GM10248 (cell line): ENCODE measurements at regions of chr10 and their contacts with region 1.

Region 1: GRCh38 chr10:75235375-75236177 is at the start of gene COMTD1:
- DNase-seq: peak; percentile 95
- CTCF ChIP-seq: peak; percentile 100

Region 2: GRCh38 chr10:74244097-74244685 is 991.4 kb before region 1 on chr10:
- CTCF ChIA-PET with region 1: interaction called, 10 read pairs
- POLR2A ChIA-PET with region 1: no interaction called
- DNase-seq: no peak
- CTCF ChIP-seq: peak; percentile 30

Region 3: DNA sequence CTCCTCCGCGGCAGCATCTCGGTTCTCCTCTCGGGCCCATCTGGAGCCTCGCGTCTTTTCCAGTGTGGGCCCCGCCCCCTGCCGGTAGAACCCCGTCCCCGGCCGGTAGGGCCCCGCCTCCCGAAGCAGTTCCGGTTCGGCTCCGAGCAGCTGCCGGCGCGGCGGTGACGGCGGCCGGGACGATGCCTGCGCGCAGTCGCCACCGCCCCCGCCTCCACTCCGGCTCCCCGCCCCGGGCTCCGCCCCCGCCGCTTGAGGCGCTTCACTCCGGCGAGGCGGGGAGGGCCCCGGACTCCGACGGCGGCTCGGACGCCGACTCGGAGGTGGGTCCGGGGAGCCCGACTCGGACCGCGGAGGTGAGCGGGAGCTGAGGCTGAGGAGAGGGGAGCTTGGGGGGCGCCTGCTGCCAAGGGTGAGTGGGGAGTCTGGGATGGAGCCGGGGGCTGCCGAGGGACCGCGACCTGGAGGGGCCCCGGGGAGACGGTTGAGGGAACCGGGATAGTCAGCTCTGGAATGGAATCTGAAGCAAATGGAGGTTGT is 124.1 kb before region 1 on chr10 and contains the start of gene SAMD8:
- CTCF ChIA-PET with region 1: interaction called, 12 read pairs
- POLR2A ChIA-PET with region 1: no interaction called
- DNase-seq: peak; percentile 100
- CTCF ChIP-seq: peak; percentile 0

Region 4: GRCh38 chr10:75187961-75188426 is 47.6 kb before region 1 on chr10:
- CTCF ChIA-PET with region 1: interaction called, 148 read pairs
- POLR2A ChIA-PET with region 1: interaction called, 4 read pairs
- DNase-seq: peak; percentile 72
- CTCF ChIP-seq: peak; percentile 76

Region 5: DNA sequence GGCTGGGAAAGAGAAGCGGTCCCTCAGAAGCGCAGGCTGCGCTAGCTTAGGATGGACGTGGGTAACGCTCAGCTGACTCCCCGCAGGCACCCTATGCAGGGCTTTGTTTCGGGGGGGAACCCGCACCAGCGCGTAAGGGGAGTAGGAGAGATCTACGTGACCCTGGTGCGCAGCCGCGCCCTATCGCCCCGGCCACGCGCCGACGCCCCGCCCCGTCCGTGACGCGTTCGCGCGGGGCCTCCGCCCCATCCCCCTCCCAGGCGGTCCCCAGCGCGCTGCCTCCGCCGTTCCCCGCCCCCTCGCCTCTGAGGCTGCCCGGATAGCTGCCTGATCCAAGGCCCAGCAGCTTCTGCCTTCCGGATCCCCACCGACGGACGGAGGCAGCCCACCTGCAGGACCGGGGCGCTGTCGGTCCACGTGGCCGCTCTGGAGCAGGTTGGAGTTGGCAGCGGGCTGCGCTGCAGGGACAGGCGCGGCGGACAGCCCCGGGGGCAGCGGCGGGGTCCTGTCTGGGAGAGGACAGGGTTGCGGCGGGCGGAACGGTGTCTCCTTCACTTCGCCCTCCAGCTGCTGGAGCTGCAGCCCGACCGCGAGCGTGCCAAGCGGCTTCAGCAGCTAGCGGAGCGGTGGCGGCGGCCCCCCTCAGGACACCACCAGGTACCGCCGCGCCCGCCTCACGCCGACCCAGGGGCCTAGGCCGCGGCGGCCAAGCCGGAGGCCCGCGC is 25.1 kb before region 1 on chr10 and contains the start of gene VDAC2:
- CTCF ChIA-PET with region 1: interaction called, 30 read pairs
- POLR2A ChIA-PET with region 1: interaction called, 7 read pairs
- DNase-seq: peak; percentile 97
- CTCF ChIP-seq: no peak

Region 6: GRCh38 chr10:75261813-75262708 is 26.5 kb after region 1 on chr10:
- CTCF ChIA-PET with region 1: no interaction called
- POLR2A ChIA-PET with region 1: no interaction called
- DNase-seq: no peak
- CTCF ChIP-seq: no peak